Uterus (tissue), 4 donors: ENCODE measurements at regions of chr14 and their contacts with region 1.

Region 1: GRCh38 chr14:103292426-103293374 is 41.3 kb upstream of the EIF5 start:
- DNase-seq: peak; percentile 77 to 81
- H3K4me3 ChIP-seq: no peak overlapping the region
- H3K27ac ChIP-seq: no peak overlapping the region
- H3K4me1 ChIP-seq: no peaks in the 10 kb centered on the region
- H3K27me3 ChIP-seq: no peaks in the 10 kb centered on the region
- CTCF ChIP-seq: peak; percentile 91 to 97 (median 95)
- POLR2A ChIP-seq: peak in 1 of 2 donors; percentile 25

Region 2: GRCh38 chr14:102717276-102717675 is 575.4 kb before region 1 on chr14:
- intact Hi-C with region 1: no loop called
- DNase-seq: no peak
- H3K4me3 ChIP-seq: no peak overlapping the region
- H3K27ac ChIP-seq: no peak overlapping the region
- H3K4me1 ChIP-seq: no peaks in the 10 kb centered on the region
- H3K27me3 ChIP-seq: no peaks in the 10 kb centered on the region
- CTCF ChIP-seq: no peak
- POLR2A ChIP-seq: no peak

Region 3: DNA sequence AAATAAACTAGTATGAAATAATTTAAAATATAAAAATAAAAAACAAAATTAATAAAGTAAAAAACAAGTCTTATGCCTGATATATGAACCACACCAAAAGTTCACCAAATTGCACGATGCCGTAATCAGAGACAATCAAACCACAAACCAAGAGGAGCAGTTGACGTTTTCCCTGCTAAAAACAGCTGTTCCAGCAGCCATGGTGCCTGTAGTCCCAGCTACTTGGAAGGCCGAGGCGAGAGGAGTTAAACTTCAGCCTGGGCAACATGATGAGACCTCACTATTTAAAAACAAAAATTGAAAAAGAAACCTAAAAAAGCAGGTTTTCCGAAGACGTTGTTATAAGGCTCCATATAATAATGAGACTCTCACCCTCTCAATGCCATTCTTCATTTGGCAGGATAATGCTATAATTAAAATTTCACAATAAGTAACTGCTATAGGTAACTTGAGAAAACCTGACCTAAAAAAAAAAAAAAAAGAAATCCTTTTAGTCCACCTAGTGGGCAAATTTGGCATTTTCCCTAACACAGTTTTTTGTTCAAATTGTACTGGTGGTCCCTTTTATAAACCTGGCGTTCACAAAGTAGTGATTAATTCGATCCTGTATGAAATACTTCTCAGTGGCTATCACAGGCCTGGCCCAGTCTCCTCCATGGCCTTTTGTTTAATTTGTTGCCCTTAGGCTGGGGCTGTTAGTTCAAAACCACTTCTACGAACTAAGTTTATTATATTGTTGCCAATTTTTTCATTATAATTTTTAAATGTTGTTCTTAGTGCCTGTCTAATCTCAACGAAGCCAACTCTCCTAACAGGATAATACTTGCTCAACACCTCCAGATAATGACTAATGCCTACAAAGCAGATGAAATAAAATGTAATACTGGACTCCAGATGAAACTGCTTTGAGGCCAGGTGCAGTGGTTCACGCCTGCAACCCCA is 107.4 kb before region 1 on chr14:
- intact Hi-C with region 1: loop called (anchors 5 kb)
- DNase-seq: no peak
- H3K4me3 ChIP-seq: no peak overlapping the region
- H3K27ac ChIP-seq: peak overlapping the region in 1 of 2 donors; percentile 28
- H3K4me1 ChIP-seq: no peaks in the 10 kb centered on the region
- H3K27me3 ChIP-seq: no peaks in the 10 kb centered on the region
- CTCF ChIP-seq: peak; percentile 57 to 66 (median 62)
- POLR2A ChIP-seq: no peak

Region 4: DNA sequence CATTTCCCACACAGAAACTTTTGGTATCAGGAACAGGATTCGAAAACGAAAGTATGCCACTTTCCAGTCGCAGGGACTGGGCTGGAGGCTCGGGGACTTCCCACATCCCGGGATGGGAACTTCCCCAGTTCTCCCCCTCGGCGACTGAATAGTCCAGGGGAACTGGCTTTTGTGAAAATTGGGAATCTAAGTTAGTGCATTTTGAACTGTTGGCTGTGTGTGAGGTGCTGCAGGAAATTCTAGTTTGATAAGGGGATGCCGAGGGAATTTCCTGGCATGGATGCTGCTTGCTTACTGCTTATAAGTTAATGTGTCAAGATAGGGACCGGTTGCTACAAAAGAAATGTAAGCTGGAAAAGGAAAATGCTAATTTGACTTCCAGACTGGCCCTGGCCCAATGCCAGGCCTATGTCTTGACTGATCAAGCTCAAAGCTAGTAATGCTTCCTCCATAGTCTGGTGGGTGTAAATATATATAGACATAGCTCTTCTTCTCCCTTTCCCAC is 32.0 kb before region 1 on chr14:
- intact Hi-C with region 1: no loop called
- DNase-seq: peak; percentile 53 to 58
- H3K4me3 ChIP-seq: peak overlapping the region; percentile 44 to 49
- H3K27ac ChIP-seq: peak overlapping the region; percentile 85 to 93
- H3K4me1 ChIP-seq: no peaks in the 10 kb centered on the region
- H3K27me3 ChIP-seq: no peaks in the 10 kb centered on the region
- CTCF ChIP-seq: no peak
- POLR2A ChIP-seq: no peak